HCT116 (cell line): ENCODE measurements at regions of chr12 and their contacts with region 1.

Region 1: GRCh38 chr12:118135788-118136558 is at the start of gene PEBP1:
- DNase-seq: peak; percentile 85
- ATAC-seq: peak; percentile 96
- H3K4me3 ChIP-seq: peak within 1 kb of the TSS; percentile 91 to 94
- H3K27ac ChIP-seq: peak within 1 kb of the TSS; percentile 81
- H3K4me1 ChIP-seq: peaks cover 21 to 29% of the 10 kb centered on the region in 2 experiments
- H3K27me3 ChIP-seq: no peaks in the 10 kb centered on the region
- CTCF ChIP-seq: no peak
- POLR2A ChIP-seq: peak; percentile 88
- RAD21 ChIP-seq: no peak
- total RNA-seq, gene PEBP1: 220 TPM

Region 2: GRCh38 chr12:117818400-117818799 is 317.6 kb before region 1 on chr12:
- CTCF ChIA-PET with region 1: no interaction called
- POLR2A ChIA-PET with region 1: no interaction called
- RAD21 ChIA-PET with region 1: no interaction called
- intact Hi-C with region 1: no loop called
- DNase-seq: no peak
- ATAC-seq: no peak
- H3K4me3 ChIP-seq: no peak overlapping the region
- H3K27ac ChIP-seq: no peak overlapping the region
- H3K4me1 ChIP-seq: no peaks in the 10 kb centered on the region
- H3K27me3 ChIP-seq: no peaks in the 10 kb centered on the region
- CTCF ChIP-seq: no peak
- POLR2A ChIP-seq: no peak
- RAD21 ChIP-seq: no peak

Region 3: GRCh38 chr12:117874842-117875434 is 261.0 kb before region 1 on chr12:
- CTCF ChIA-PET with region 1: interaction called, 3 read pairs
- POLR2A ChIA-PET with region 1: no interaction called
- RAD21 ChIA-PET with region 1: no interaction called
- intact Hi-C with region 1: loop called (anchors 10 kb)
- DNase-seq: peak; percentile 57
- ATAC-seq: peak; percentile 84
- H3K4me3 ChIP-seq: no peak overlapping the region
- H3K27ac ChIP-seq: no peak overlapping the region
- H3K4me1 ChIP-seq: peaks cover 7 to 25% of the 10 kb centered on the region in 2 experiments; a peak in 3 of 4 replicates
- H3K27me3 ChIP-seq: no peaks in the 10 kb centered on the region
- CTCF ChIP-seq: peak; percentile 84 to 92 (median 84)
- POLR2A ChIP-seq: no peak
- RAD21 ChIP-seq: peak; percentile 98

Region 4: DNA sequence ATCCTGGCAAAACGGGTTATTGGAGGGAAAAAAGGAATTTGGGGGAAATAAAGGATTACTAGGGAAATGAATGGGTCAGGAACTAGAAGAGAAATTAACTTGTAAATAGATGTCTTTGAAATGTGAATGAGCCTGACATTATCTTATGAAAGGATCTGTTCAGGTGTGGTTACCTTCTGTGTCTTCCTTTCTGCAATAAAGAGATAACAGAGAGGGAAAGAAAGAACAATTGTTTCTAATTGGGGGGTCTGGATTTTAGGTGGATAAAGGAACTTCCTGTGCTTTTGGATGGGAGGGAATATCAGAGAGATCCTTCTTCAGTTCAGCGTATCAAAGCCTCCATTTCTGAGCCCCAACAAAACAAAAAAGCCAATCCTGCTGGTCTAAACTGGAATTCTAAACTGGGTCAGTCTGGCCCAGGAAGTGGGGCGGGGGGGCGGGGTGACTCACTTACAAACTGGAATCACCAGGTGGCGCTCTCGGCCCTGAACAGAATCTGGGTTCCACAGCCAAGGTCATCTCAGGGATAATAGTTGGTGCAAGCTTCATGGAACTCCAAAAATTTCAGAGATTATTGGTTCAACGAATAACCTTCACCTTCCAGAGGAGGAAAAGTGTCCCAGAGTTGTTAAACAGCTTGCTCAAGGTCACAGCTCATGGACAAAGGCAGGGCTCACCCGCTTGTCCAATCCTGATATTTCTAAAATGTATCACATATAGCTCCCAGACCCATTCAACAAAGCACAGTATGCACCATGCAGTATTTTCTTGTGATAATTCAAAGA is 15.2 kb before region 1 on chr12:
- CTCF ChIA-PET with region 1: interaction called, 13 read pairs
- POLR2A ChIA-PET with region 1: interaction called, 5 read pairs
- RAD21 ChIA-PET with region 1: no interaction called
- intact Hi-C with region 1: no loop called
- DNase-seq: no peak
- ATAC-seq: peak; percentile 89
- H3K4me3 ChIP-seq: no peak overlapping the region
- H3K27ac ChIP-seq: peak overlapping the region; percentile 36; the same call in 1 of the 2 replicates
- H3K4me1 ChIP-seq: peaks cover 4 to 10% of the 10 kb centered on the region in 2 experiments; a peak in 3 of 4 replicates
- H3K27me3 ChIP-seq: no peaks in the 10 kb centered on the region
- CTCF ChIP-seq: peak; percentile 39 to 52 (median 46); a peak in 4 of 6 replicates
- POLR2A ChIP-seq: no peak
- RAD21 ChIP-seq: peak; percentile 66